ENCODE measurements at regions of chr10 and their contacts with region 1.

Region 1: GRCh38 chr10:12710594-12711349 is 290.7 kb downstream of the CCDC3 start:
- DNase-seq: peak; percentile 79
- CTCF ChIP-seq: peak; percentile 88

Region 2: GRCh38 chr10:12264204-12264940 is 446.4 kb before region 1 on chr10:
- in situ Hi-C with region 1: loop called (anchors 25 kb)
- DNase-seq: peak; percentile 90
- CTCF ChIP-seq: peak; percentile 85